B cell (primary cell): ENCODE measurements at regions of chr5 and their contacts with region 1.

Region 1: GRCh38 chr5:169583424-169584204 is at the start of gene SPDL1:
- DNase-seq: peak; percentile 96
- ATAC-seq: peak; percentile 94
- H3K4me3 ChIP-seq: peak within 1 kb of the TSS; percentile 74 to 91 (median 79)
- H3K4me3 Mint-ChIP-seq: peak within 1 kb of the TSS; percentile 99
- H3K27ac ChIP-seq: peak within 1 kb of the TSS; percentile 21 to 78
- H3K27ac Mint-ChIP-seq: peak within 1 kb of the TSS; percentile 89
- H3K4me1 ChIP-seq: peaks cover 6 to 12% of the 10 kb centered on the region in 2 donors
- H3K4me1 Mint-ChIP-seq: peaks cover 22% of the 10 kb centered on the region
- H3K27me3 ChIP-seq: peaks cover 0 to 7% (median under 1%) of the 10 kb centered on the region in 4 experiments
- H3K27me3 Mint-ChIP-seq: peaks cover 8% of the 10 kb centered on the region
- CTCF ChIP-seq: no peak
- total RNA-seq, gene SPDL1: 14.8 and 17.9 TPM in 2 replicates

Region 2: GRCh38 chr5:168486136-168486879 is 1097.3 kb before region 1 on chr5 and contains the start of gene RARS1:
- CTCF ChIA-PET with region 1: no interaction called
- POLR2A ChIA-PET with region 1: no interaction called
- intact Hi-C with region 1: loop called (anchors 5 kb)
- DNase-seq: peak; percentile 89
- ATAC-seq: peak; percentile 93
- H3K4me3 ChIP-seq: peak within 1 kb of the TSS; percentile 73 to 97 (median 93)
- H3K4me3 Mint-ChIP-seq: peak within 1 kb of the TSS; percentile 100
- H3K27ac ChIP-seq: peak within 1 kb of the TSS in 1 of 2 donors; percentile 50
- H3K27ac Mint-ChIP-seq: peak within 1 kb of the TSS; percentile 92
- H3K4me1 ChIP-seq: peaks cover 7 to 12% of the 10 kb centered on the region in 2 donors
- H3K4me1 Mint-ChIP-seq: peaks cover 33% of the 10 kb centered on the region
- H3K27me3 ChIP-seq: peaks cover 0 to 6% (median 0%) of the 10 kb centered on the region in 4 experiments
- H3K27me3 Mint-ChIP-seq: no peaks in the 10 kb centered on the region
- CTCF ChIP-seq: peak; percentile 93
- total RNA-seq, gene RARS1: 65.4 and 69.4 TPM in 2 replicates

Region 3: GRCh38 chr5:168987543-168988300 is 595.9 kb before region 1 on chr5:
- CTCF ChIA-PET with region 1: interaction called, 15 read pairs
- POLR2A ChIA-PET with region 1: no interaction called
- intact Hi-C with region 1: no loop called
- DNase-seq: peak; percentile 46
- ATAC-seq: peak; percentile 36
- H3K4me3 ChIP-seq: no peak overlapping the region
- H3K4me3 Mint-ChIP-seq: no peak overlapping the region
- H3K27ac ChIP-seq: no peak overlapping the region
- H3K27ac Mint-ChIP-seq: no peak overlapping the region
- H3K4me1 ChIP-seq: no peaks in the 10 kb centered on the region
- H3K4me1 Mint-ChIP-seq: peaks cover 2% of the 10 kb centered on the region
- H3K27me3 ChIP-seq: peaks cover 0 to 11% (median 5%) of the 10 kb centered on the region in 4 experiments
- H3K27me3 Mint-ChIP-seq: peaks cover 21% of the 10 kb centered on the region
- CTCF ChIP-seq: peak; percentile 82

Region 4: GRCh38 chr5:169067751-169068173 is 515.9 kb before region 1 on chr5:
- CTCF ChIA-PET with region 1: no interaction called
- POLR2A ChIA-PET with region 1: no interaction called
- intact Hi-C with region 1: no loop called
- DNase-seq: no peak
- ATAC-seq: no peak
- H3K4me3 ChIP-seq: no peak overlapping the region
- H3K4me3 Mint-ChIP-seq: no peak overlapping the region
- H3K27ac ChIP-seq: no peak overlapping the region
- H3K27ac Mint-ChIP-seq: no peak overlapping the region
- H3K4me1 ChIP-seq: no peaks in the 10 kb centered on the region
- H3K4me1 Mint-ChIP-seq: no peaks in the 10 kb centered on the region
- H3K27me3 ChIP-seq: peaks cover 0 to 6% (median 2%) of the 10 kb centered on the region in 4 experiments
- H3K27me3 Mint-ChIP-seq: peaks cover 23% of the 10 kb centered on the region
- CTCF ChIP-seq: no peak

Region 5: DNA sequence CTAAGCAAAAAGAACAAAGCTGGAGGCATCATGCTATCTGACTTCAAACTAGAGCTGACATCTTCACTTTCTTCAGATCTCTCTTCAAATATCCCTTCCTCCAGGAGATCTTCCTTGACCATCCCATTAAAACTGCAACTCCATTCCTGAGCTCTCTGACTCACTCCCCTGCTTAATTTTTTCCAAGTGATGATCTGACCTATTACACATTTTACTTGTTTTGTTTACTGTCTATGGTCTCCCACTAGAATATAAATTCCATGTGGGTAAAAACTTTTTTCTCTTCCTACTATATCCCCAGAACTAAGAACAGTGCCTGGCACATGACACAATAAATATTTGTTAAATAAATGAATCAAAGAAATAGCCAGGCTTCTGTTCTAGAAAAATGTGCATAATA is 370.1 kb before region 1 on chr5:
- CTCF ChIA-PET with region 1: no interaction called
- POLR2A ChIA-PET with region 1: no interaction called
- intact Hi-C with region 1: no loop called
- DNase-seq: no peak
- ATAC-seq: no peak
- H3K4me3 ChIP-seq: no peak overlapping the region
- H3K4me3 Mint-ChIP-seq: no peak overlapping the region
- H3K27ac ChIP-seq: no peak overlapping the region
- H3K27ac Mint-ChIP-seq: no peak overlapping the region
- H3K4me1 ChIP-seq: no peaks in the 10 kb centered on the region
- H3K4me1 Mint-ChIP-seq: no peaks in the 10 kb centered on the region
- H3K27me3 ChIP-seq: no peaks in the 10 kb centered on the region
- H3K27me3 Mint-ChIP-seq: no peaks in the 10 kb centered on the region
- CTCF ChIP-seq: no peak

Region 6: GRCh38 chr5:169637085-169637548 is 53.5 kb after region 1 on chr5 and contains the start of gene DOCK2:
- CTCF ChIA-PET with region 1: interaction called, 5 read pairs
- POLR2A ChIA-PET with region 1: interaction called, 4 read pairs
- intact Hi-C with region 1: loop called (anchors 1 kb)
- DNase-seq: peak; percentile 86
- ATAC-seq: peak; percentile 92
- H3K4me3 ChIP-seq: peak within 1 kb of the TSS; percentile 83 to 89 (median 87)
- H3K4me3 Mint-ChIP-seq: peak within 1 kb of the TSS; percentile 98
- H3K27ac ChIP-seq: peak within 1 kb of the TSS; percentile 86 to 90
- H3K27ac Mint-ChIP-seq: peak within 1 kb of the TSS; percentile 96
- H3K4me1 ChIP-seq: peaks cover 30 to 36% of the 10 kb centered on the region in 2 donors
- H3K4me1 Mint-ChIP-seq: peaks cover 49% of the 10 kb centered on the region
- H3K27me3 ChIP-seq: no peaks in the 10 kb centered on the region
- H3K27me3 Mint-ChIP-seq: no peaks in the 10 kb centered on the region
- CTCF ChIP-seq: no peak
- total RNA-seq, gene DOCK2: 330 and 342 TPM in 2 replicates

Region 7: DNA sequence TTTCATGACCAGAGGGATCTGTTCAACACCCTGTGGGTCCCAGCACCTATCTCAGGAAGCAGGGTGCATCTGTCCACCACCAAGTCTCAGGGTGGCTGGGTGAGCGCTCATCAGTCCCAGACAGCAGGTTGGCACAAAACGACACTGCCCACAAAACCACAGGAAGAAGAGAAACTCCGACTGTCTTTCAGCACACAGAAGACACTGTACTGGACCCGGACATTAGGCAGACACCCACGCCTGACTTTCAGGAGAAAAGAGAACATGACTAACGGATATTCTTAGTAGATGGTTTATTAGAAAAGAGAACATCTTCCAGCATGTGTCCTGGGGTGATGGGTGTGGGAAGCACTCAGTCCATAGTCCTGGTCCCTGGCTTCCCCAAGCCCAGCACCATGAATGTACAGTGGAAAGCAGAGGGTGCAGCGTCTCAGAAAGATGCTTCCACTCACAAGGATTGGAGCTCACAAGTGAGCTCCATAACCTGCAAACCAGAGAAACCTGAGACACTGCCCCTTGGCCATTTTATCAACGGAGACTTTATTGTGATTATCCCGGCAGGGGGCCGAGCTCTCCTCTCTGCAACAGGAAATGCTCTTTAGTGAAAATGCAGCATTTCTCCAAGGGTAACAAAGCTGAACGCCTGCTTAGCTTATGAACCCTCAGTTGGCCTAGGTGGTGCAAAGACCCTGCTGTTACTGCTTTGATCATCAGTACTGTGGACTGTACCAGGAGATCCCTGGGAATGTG is 749.7 kb after region 1 on chr5:
- CTCF ChIA-PET with region 1: no interaction called
- POLR2A ChIA-PET with region 1: no interaction called
- intact Hi-C with region 1: loop called (anchors 5 kb)
- DNase-seq: peak; percentile 30
- ATAC-seq: peak; percentile 10
- H3K4me3 ChIP-seq: no peak overlapping the region
- H3K4me3 Mint-ChIP-seq: peak overlapping the region; percentile 23
- H3K27ac ChIP-seq: peak overlapping the region in 1 of 2 donors; percentile 78
- H3K27ac Mint-ChIP-seq: no peak overlapping the region
- H3K4me1 ChIP-seq: peaks cover 53 to 59% of the 10 kb centered on the region in 2 donors
- H3K4me1 Mint-ChIP-seq: peaks cover 35% of the 10 kb centered on the region
- H3K27me3 ChIP-seq: no peaks in the 10 kb centered on the region
- H3K27me3 Mint-ChIP-seq: no peaks in the 10 kb centered on the region
- CTCF ChIP-seq: no peak